A673 (cell line): ENCODE measurements at regions of chr12 and their contacts with region 1.

Region 1: DNA sequence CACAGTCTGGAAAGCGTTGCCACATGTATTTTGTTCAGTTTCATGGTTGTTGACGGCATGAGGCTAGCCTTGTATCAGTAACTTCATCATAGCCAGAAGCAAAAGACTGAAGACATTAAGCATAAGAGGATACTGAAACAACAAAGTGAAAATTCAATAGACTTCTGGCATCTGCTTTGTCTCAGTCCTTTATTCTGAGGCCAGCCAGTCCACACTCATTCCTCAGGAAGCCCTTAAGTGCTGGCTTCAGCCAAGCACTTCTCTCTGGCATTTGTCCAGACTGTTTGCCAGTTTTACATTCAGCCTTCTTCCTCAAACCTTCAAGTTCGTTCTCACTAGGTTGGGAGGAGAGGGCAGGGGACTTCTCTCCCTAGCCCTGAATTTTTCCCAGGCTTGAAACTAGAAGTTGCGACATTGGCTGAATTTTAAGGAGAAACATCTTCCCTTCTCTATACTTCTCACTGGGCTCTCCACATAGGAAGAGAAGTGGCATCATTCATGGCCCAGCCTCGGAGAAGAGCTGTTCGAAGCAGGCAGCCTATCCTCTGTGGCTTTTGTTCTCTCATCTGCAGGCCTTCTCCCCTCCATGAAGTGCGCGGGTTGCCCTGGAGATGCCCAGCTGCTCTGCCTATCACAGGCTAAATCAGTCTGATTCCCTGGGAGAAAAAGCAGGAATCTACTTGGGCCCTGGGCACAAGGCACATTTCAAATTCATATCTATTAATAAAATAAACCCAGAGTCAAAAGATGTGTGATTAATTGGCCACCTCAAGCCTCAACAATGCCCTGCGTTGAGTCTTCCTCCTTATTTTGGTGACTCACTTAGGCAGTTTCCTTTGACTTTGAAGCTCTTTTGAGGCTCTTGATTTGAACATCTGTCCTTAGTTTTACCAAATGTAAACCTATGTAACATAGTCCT is 130.9 kb upstream of the PLEKHA5 start:
- DNase-seq: peak; percentile 5
- H3K4me3 ChIP-seq: no peak overlapping the region
- H3K27ac ChIP-seq: no peak overlapping the region
- H3K4me1 ChIP-seq: no peaks in the 10 kb centered on the region
- H3K27me3 ChIP-seq: no peaks in the 10 kb centered on the region
- CTCF ChIP-seq: no peak

Region 2: GRCh38 chr12:18217966-18218365 is 780.6 kb before region 1 on chr12:
- CTCF ChIA-PET with region 1: no interaction called
- POLR2A ChIA-PET with region 1: no interaction called
- intact Hi-C with region 1: no loop called
- DNase-seq: no peak
- H3K4me3 ChIP-seq: no peak overlapping the region
- H3K27ac ChIP-seq: no peak overlapping the region
- H3K4me1 ChIP-seq: no peaks in the 10 kb centered on the region
- H3K27me3 ChIP-seq: no peaks in the 10 kb centered on the region
- CTCF ChIP-seq: no peak

Region 3: GRCh38 chr12:19186722-19187661 is 188.4 kb after region 1 on chr12:
- CTCF ChIA-PET with region 1: no interaction called
- POLR2A ChIA-PET with region 1: no interaction called
- intact Hi-C with region 1: no loop called
- DNase-seq: peak; percentile 57
- H3K4me3 ChIP-seq: no peak overlapping the region
- H3K27ac ChIP-seq: no peak overlapping the region
- H3K4me1 ChIP-seq: no peaks in the 10 kb centered on the region
- H3K27me3 ChIP-seq: no peaks in the 10 kb centered on the region
- CTCF ChIP-seq: peak; percentile 73

Region 4: GRCh38 chr12:19323805-19324204 is 325.2 kb after region 1 on chr12:
- CTCF ChIA-PET with region 1: no interaction called
- POLR2A ChIA-PET with region 1: interaction called, 13 read pairs
- intact Hi-C with region 1: no loop called
- DNase-seq: no peak
- H3K4me3 ChIP-seq: no peak overlapping the region
- H3K27ac ChIP-seq: no peak overlapping the region
- H3K4me1 ChIP-seq: no peaks in the 10 kb centered on the region
- H3K27me3 ChIP-seq: no peaks in the 10 kb centered on the region
- CTCF ChIP-seq: no peak